Activated CD4-positive, alpha-beta T cell treated with anti-CD3 and anti-CD28 coated beads for 36 hours (primary cell): ENCODE measurements at regions of chr1 and their contacts with region 1.

Region 1: DNA sequence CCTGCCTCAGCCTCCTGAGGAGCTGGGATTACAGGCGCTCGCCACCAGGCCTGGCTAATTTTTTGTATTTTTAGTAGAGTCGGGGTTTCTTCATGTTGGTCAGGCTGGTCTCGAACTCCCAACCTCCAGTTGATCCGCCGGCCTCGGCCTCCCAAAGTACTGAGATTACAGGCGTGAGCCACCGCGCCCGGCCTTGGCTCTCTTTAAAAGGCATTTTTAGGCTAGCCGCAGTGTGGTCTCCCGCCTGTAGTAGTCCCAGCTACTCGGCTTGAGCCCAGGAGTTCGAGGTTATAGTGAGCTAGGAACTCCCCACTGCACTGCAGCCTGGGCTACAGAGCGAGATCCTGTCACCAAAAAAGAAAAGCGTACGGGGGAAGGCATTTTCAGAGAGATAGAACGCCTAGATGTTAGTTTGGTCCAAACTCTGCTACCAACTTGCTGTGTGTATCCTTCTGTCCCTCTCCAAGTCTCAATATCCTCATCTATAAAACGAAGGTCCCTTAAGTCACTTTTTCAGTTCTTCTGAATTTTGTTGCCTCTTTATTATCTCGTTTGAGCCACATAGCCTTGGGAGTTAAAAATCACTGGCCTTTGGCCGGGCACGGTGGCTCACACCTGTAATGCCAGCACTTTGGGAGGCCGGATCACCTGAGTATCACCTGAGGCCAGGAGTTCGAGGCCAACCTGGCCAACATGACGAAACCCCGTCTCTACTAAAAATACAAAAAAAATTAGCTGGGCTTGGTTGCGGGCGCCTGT is 734 bp downstream of the MED18 start:
- DNase-seq: peak; percentile 61
- ATAC-seq: peak; percentile 19
- H3K4me3 Mint-ChIP-seq: peak overlapping the region; percentile 96
- H3K27ac Mint-ChIP-seq: peak overlapping the region; percentile 97
- H3K4me1 Mint-ChIP-seq: peaks cover 39% of the 10 kb centered on the region
- H3K27me3 Mint-ChIP-seq: no peaks in the 10 kb centered on the region

Region 2: GRCh38 chr1:27321813-27322577 is 1007.6 kb before region 1 on chr1 and contains the start of gene TMEM222:
- CTCF ChIA-PET with region 1: no interaction called
- POLR2A ChIA-PET with region 1: no interaction called
- intact Hi-C with region 1: loop called in 1 of 2 experiments (anchors 5 kb)
- DNase-seq: peak; percentile 99
- ATAC-seq: peak; percentile 98
- H3K4me3 Mint-ChIP-seq: peak within 1 kb of the TSS; percentile 94
- H3K27ac Mint-ChIP-seq: peak within 1 kb of the TSS; percentile 90
- H3K4me1 Mint-ChIP-seq: peaks cover 41% of the 10 kb centered on the region
- H3K27me3 Mint-ChIP-seq: no peaks in the 10 kb centered on the region
- total RNA-seq, gene TMEM222: 27.5 to 31.2 TPM

Region 3: GRCh38 chr1:27574871-27575831 is 754.4 kb before region 1 on chr1:
- CTCF ChIA-PET with region 1: no interaction called
- POLR2A ChIA-PET with region 1: interaction called, 11 read pairs
- intact Hi-C with region 1: no loop called
- DNase-seq: no peak
- ATAC-seq: peak; percentile 15
- H3K4me3 Mint-ChIP-seq: no peak overlapping the region
- H3K27ac Mint-ChIP-seq: no peak overlapping the region
- H3K4me1 Mint-ChIP-seq: peaks cover 5% of the 10 kb centered on the region
- H3K27me3 Mint-ChIP-seq: no peaks in the 10 kb centered on the region

Region 4: GRCh38 chr1:27990920-27991537 is 338.5 kb before region 1 on chr1:
- CTCF ChIA-PET with region 1: no interaction called
- POLR2A ChIA-PET with region 1: no interaction called
- intact Hi-C with region 1: no loop called
- DNase-seq: no peak
- ATAC-seq: no peak
- H3K4me3 Mint-ChIP-seq: no peak overlapping the region
- H3K27ac Mint-ChIP-seq: peak overlapping the region; percentile 3
- H3K4me1 Mint-ChIP-seq: peaks cover 29% of the 10 kb centered on the region
- H3K27me3 Mint-ChIP-seq: no peaks in the 10 kb centered on the region

Region 5: DNA sequence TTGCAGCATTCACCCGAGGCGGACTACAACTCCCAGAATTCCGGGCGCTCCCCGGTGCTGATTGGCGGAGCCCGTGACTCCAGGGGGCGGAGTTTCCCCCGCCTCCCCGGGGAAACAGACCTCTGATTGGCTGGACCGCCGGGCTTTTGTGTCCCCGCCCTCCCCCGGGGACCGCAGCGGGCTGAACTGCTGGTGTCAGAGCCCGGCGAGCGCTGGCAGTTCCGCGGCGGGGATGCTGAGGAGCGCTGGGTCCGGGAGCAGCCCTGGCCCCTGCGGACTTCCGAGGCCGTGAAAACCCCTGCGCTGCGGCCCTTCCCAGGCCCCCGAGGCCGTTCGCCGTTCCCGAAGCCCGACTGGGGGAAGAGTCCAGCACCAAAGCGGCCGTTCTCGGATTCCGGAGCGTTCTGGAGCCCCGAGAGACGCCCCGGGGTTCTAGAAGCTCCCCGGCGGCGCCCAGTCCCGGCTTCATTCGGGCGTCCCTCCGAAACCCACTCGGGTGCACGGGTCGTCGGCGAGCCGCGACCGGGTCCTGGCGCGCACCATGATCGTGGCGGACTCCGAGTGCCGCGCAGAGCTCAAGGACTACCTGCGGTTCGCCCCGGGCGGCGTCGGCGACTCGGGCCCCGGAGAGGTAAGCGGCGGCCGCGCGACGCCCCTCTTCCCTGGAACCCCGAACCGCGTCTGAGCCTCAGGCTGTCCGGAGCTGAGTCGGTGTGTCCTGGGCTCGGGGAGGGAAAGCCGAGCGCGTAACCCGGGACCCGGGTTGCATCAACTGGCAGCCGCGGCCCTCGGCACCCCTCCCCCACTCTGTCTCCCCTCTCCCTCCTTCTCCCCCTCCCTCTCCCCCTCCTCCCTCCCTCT is 70.0 kb before region 1 on chr1 and contains the start of gene SESN2:
- CTCF ChIA-PET with region 1: interaction called, 4 read pairs
- POLR2A ChIA-PET with region 1: interaction called, 5 read pairs
- intact Hi-C with region 1: loop called (anchors 1 to 2 kb)
- DNase-seq: peak; percentile 100
- ATAC-seq: peak; percentile 93
- H3K4me3 Mint-ChIP-seq: peak within 1 kb of the TSS; percentile 81
- H3K27ac Mint-ChIP-seq: peak within 1 kb of the TSS; percentile 99
- H3K4me1 Mint-ChIP-seq: peaks cover 42% of the 10 kb centered on the region
- H3K27me3 Mint-ChIP-seq: no peaks in the 10 kb centered on the region
- total RNA-seq, gene SESN2: 32.9 to 33.3 TPM

Region 6: DNA sequence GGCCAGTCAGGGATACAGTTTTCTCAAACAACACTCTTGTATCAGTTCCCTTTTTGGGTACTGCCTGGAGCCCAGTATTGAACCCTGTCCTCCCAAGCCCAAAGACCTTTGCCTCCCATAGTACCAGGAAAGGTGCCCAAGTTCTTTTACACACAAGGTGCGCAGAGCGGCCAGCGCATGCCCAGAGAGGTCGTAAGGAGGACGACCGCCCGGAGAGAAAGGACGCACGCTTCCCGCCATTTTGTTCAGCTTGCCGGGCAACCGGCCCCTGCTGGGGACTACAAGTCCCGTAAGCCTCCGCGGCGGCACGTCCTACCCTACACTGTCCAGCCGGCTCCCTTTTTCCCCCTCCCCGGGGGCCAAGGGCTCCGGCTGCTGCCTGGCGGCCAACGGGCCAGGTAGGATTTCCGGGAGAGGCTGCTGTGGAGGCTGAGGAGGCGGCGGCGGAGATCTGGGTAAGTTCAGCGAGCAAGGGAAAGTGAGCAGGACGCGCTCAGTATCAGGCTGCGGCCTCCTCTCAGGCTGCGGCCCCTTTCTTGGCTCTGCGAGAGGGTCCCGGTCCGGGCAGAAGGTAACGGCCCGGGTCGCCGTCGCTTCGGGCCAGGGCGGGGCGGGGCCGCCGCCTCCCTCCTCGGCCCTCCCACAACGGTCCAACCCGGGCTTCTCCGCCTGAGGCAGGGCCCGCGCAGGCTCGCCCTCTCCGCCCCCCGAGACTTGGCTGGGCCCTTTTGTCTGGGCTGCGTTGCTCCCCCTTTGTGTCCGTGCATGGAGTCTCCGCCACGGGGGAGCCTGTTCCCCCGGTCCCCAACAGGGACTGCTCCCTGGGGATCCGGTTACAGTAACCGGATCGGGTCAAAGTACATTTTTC is 40.0 kb after region 1 on chr1 and contains the start of gene PHACTR4:
- CTCF ChIA-PET with region 1: no interaction called
- POLR2A ChIA-PET with region 1: interaction called, 4 read pairs
- intact Hi-C with region 1: loop called in 1 of 2 experiments (anchors 1 kb)
- DNase-seq: peak; percentile 90
- ATAC-seq: peak; percentile 93
- H3K4me3 Mint-ChIP-seq: peak within 1 kb of the TSS; percentile 92
- H3K27ac Mint-ChIP-seq: peak within 1 kb of the TSS; percentile 92
- H3K4me1 Mint-ChIP-seq: peaks cover 25% of the 10 kb centered on the region
- H3K27me3 Mint-ChIP-seq: no peaks in the 10 kb centered on the region
- total RNA-seq, gene PHACTR4: 23.0 to 30.1 TPM

Region 7: DNA sequence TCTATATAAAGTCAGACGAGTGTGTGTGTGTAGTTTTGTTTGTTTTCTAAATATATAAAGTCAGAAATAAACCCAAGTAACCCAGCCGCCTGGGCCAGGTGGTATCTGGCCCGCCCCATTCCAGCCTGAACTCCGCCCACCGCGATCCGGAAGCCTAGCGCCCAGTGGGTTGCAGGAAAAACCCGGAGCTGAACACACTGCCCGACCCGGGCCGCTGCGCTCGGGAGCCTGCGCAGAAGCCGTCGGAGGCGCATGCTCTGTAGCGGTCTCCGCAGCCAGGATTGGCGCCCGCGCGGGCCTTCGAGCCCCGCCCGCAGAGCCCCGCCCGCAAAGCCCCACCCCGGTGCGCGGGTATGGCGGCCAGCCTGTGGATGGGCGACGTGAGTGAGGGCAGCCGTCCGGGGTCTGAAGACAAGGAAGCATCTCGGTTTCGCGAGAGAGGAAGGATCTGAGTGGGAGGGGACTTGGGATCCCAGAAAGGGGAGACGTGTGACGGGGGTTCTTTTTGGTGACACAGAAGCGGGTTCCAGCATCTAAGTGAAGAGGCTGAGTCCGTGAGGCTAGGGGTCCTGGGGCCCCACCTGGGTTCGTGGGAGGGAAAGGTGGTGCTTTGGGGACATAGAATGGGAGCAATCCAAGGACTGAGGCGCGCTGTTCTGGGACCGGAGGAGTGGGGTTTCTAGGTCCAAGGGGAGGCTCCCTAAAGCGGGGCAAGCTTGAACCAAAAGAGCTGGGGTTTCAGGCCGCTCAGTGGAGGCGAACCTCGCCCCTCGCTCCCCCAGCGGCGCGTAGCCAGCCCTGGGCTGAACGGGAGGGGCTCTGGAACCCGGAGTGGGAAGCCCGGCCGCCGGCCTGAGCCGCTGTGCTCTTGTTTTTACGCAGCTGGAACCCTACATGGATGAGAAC is 223.4 kb after region 1 on chr1 and contains the start of gene TRNAU1AP:
- CTCF ChIA-PET with region 1: no interaction called
- POLR2A ChIA-PET with region 1: no interaction called
- intact Hi-C with region 1: loop called in 1 of 2 experiments (anchors 1 kb)
- DNase-seq: peak; percentile 99
- ATAC-seq: peak; percentile 94
- H3K4me3 Mint-ChIP-seq: peak within 1 kb of the TSS; percentile 92
- H3K27ac Mint-ChIP-seq: peak within 1 kb of the TSS; percentile 95
- H3K4me1 Mint-ChIP-seq: peaks cover 24% of the 10 kb centered on the region
- H3K27me3 Mint-ChIP-seq: no peaks in the 10 kb centered on the region
- total RNA-seq, gene TRNAU1AP: 50.7 to 60.2 TPM

Region 8: GRCh38 chr1:29290414-29290985 is 960.9 kb after region 1 on chr1:
- CTCF ChIA-PET with region 1: no interaction called
- POLR2A ChIA-PET with region 1: no interaction called
- intact Hi-C with region 1: no loop called
- DNase-seq: no peak
- ATAC-seq: no peak
- H3K4me3 Mint-ChIP-seq: no peak overlapping the region
- H3K27ac Mint-ChIP-seq: no peak overlapping the region
- H3K4me1 Mint-ChIP-seq: no peaks in the 10 kb centered on the region
- H3K27me3 Mint-ChIP-seq: no peaks in the 10 kb centered on the region